ENCODE measurements at regions of chr15 and their contacts with region 1.

Region 1: GRCh38 chr15:101652098-101652782 is at the start of gene TM2D3:
- DNase-seq: peak; percentile 96
- ATAC-seq: peak; percentile 96
- H3K4me3 Mint-ChIP-seq: peak within 1 kb of the TSS; percentile 91
- H3K27ac Mint-ChIP-seq: peak within 1 kb of the TSS; percentile 97
- H3K4me1 Mint-ChIP-seq: peaks cover 43% of the 10 kb centered on the region
- H3K27me3 Mint-ChIP-seq: no peaks in the 10 kb centered on the region
- total RNA-seq, gene TM2D3: 34.3 to 35.9 TPM

Region 2: DNA sequence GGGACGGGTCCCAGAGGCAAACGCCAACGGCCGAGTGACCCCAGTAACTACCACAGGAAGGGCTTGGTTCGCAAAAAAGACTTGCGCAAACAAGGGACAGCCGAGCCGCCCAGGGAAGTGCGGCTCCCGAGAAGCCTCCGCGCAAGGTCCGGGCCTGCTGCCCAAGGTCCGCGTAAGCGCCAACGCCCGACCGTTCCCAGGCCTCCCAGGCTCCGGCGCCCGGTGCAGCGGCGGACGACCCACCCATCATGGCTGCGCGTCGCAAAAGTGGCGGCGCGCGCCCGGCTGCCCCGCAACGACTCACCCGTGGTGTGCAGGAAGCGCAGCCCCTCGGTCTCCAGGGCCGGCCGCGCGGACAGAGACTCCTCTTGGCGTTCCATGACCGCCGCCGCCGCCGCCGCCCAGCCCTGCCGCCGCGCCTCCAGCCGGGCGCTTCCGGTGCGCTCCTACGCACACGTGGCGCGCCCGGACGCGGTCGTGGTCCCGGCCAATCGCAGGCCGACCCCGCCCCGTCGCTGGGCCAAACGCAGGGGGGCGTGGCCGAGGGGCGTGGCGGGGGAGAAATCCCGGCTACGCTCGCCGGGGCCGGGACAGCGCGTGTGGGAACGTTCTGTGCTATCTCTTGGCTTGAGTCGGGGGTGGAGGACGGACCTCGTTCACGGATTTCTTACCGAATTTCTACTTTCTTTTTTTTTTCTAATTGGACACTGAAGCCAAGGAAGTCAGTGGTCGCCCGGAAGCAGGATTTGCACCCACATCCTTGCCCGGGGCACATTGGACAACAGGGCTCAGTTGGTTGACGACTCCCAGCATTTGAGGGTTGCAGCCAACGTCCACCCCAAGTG is 375.0 kb before region 1 on chr15 and contains the start of gene SELENOS:
- CTCF ChIA-PET with region 1: no interaction called
- POLR2A ChIA-PET with region 1: no interaction called
- intact Hi-C with region 1: loop called in 1 of 2 experiments (anchors 1 kb)
- DNase-seq: peak; percentile 93
- ATAC-seq: peak; percentile 92
- H3K4me3 Mint-ChIP-seq: peak within 1 kb of the TSS; percentile 89
- H3K27ac Mint-ChIP-seq: peak within 1 kb of the TSS; percentile 79
- H3K4me1 Mint-ChIP-seq: peaks cover 24% of the 10 kb centered on the region
- H3K27me3 Mint-ChIP-seq: no peaks in the 10 kb centered on the region
- total RNA-seq, gene SELENOS: 14.5 to 20.8 TPM

Region 3: GRCh38 chr15:101333401-101333800 is 318.8 kb before region 1 on chr15:
- CTCF ChIA-PET with region 1: no interaction called
- POLR2A ChIA-PET with region 1: no interaction called
- intact Hi-C with region 1: loop called in 1 of 2 experiments (anchors 1 kb)
- DNase-seq: no peak
- ATAC-seq: no peak
- H3K4me3 Mint-ChIP-seq: no peak overlapping the region
- H3K27ac Mint-ChIP-seq: peak overlapping the region; percentile 75
- H3K4me1 Mint-ChIP-seq: peaks cover 14% of the 10 kb centered on the region
- H3K27me3 Mint-ChIP-seq: no peaks in the 10 kb centered on the region